Heart left ventricle (tissue), 16 donors: ENCODE measurements at regions of chr19 and their contacts with region 1.

Region 1: GRCh38 chr19:50511068-50511822 is at the start of gene JOSD2:
- DNase-seq: peak; percentile 98 to 100 (median 99)
- ATAC-seq: peak; percentile 94 to 97 (median 95)
- H3K4me3 ChIP-seq: peak within 1 kb of the TSS; percentile 42 to 89 (median 74)
- H3K27ac ChIP-seq: peak within 1 kb of the TSS; percentile 50 to 86 (median 78)
- H3K4me1 ChIP-seq: peaks cover 0 to 20% (median 8%) of the 10 kb centered on the region in 12 donors
- H3K27me3 ChIP-seq: peaks cover 0 to 8% (median 0%) of the 10 kb centered on the region in 9 donors
- CTCF ChIP-seq: peak in 1 of 12 donors; percentile 17
- POLR2A ChIP-seq: peak in 1 of 2 donors; percentile 77
- total RNA-seq, gene JOSD2: 18.7 to 43.8 (median 29.5) TPM

Region 2: DNA sequence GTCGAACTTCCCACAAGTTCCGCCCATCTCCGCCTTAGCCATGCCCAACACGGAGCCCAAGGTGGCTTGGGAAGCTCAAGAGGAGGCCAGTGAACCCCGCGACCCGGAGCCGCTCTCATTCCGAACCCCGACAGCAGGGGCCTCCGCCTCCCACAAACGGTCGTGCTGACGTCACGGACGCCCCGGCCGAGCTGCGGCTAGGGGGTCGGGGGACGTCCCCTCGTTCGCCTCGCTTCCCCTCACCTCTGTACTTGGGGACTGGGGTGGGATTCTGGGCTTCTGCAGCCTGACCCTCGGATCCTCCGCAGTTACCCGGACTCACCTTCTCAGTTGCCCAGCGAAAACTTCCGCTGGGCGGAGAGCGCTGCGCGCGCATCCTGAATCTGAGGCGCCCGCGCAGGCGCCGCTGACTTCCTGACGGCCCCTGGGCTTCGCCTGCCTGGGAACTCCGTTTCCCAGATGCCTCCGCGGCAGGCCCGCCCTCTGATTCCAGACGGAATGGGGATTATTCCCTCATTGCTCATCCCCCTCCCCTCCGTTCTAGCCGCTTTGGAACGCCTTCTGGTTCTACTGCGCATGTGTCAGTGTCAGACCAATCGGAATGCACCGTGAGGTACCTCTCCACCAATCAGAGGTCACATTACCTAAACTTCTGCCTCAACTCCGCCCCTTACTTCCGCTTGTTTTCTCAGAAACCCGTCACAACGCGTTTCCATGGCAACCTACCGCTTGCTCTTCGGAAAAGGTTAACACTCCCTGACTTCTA is 486.0 kb before region 1 on chr19 and contains the start of gene VRK3:
- intact Hi-C with region 1: loop called in 1 of 10 experiments (anchors 10 kb)
- DNase-seq: peak; percentile 99 to 100 (median 99)
- ATAC-seq: peak; percentile 96 to 99 (median 98)
- H3K4me3 ChIP-seq: peak within 1 kb of the TSS; percentile 73 to 100 (median 94)
- H3K27ac ChIP-seq: peak within 1 kb of the TSS; percentile 69 to 97 (median 93)
- H3K4me1 ChIP-seq: peaks cover 0 to 38% (median 24%) of the 10 kb centered on the region in 12 donors
- H3K27me3 ChIP-seq: no peaks in the 10 kb centered on the region
- CTCF ChIP-seq: peak in 2 of 12 donors; percentile 6 to 18
- POLR2A ChIP-seq: peak in 1 of 2 donors; percentile 73
- total RNA-seq, gene VRK3: 17.8 to 33.7 (median 23.1) TPM

Region 3: DNA sequence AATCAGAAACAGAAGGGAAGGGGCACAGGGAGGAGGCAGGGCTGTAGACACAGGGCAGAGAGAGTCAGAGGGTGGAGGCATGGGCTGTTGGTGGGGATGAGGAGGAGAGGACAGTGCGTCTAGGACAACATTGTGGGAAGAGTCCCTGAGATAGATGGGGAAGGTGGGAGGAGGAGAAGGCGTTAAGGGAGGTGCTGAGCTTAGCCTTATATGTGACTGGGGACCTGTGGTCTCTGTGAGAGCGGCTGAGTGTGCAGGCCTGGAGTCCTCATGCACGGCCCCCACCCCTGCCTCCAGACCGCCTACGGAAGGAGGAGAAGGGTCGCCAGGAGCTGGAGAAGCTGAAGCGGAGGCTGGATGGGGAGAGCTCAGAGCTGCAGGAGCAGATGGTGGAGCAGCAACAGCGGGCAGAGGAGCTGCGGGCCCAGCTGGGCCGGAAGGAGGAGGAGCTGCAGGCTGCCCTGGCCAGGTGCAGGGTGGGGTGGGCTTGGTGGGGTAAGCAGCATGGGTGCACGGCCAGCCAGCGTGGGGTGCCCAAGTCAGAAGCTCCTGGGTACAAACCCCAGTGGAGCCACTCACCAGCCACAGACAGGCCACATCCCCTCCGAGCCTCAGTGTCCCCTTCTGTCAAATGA is 238.9 kb before region 1 on chr19:
- intact Hi-C with region 1: no loop called
- DNase-seq: no peak
- ATAC-seq: no peak
- H3K4me3 ChIP-seq: no peak overlapping the region
- H3K27ac ChIP-seq: no peak overlapping the region
- H3K4me1 ChIP-seq: peaks cover 0 to 4% (median 0%) of the 10 kb centered on the region in 12 donors
- H3K27me3 ChIP-seq: no peaks in the 10 kb centered on the region
- CTCF ChIP-seq: no peak
- POLR2A ChIP-seq: no peak

Region 4: DNA sequence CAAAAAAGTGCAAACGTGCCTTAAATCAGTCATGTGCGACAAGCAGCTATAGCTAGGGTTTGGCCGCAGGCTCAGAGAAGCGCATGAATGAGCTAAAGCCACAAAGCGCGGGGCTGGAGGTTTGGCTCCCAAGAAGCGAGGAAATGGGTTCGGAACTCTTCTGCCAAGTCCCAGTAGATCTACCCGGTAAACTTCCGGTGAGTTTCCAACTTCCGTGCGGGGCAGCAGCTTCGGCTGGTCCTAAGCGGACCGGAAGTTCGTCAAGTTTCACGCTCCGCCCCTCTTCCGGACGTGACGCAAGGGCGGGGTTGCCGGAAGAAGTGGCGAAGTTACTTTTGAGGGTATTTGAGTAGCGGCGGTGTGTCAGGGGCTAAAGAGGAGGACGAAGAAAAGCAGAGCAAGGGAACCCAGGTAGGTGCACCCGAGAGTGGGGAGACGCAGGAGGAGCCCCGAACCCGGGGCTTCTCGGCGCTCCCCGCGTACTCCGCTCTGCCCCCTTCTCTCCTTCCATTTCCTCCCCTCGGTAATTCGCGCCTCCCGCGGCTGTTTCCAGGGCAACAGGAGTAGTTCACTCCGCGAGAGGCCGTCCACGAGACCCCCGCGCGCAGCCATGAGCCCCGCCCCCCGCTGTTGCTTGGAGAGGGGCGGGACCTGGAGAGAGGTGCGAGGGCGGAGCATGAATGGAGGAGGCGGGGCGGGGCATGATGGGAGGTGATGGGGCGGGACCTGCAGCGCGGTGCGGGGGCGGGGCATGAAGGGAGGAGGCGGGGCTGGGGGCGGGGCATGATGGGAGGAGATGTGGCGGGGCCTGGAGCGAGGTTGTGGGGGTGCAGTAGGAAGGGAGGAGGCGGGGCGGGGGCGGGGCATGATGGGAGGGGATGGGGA is 134.8 kb before region 1 on chr19 and contains the start of gene NR1H2:
- intact Hi-C with region 1: loop called in 2 of 10 experiments (anchors 2 to 5 kb)
- DNase-seq: peak; percentile 95 to 97 (median 95)
- ATAC-seq: peak; percentile 91 to 98 (median 93)
- H3K4me3 ChIP-seq: peak within 1 kb of the TSS; percentile 74 to 99 (median 92)
- H3K27ac ChIP-seq: peak within 1 kb of the TSS; percentile 96 to 100 (median 99)
- H3K4me1 ChIP-seq: peaks cover 0 to 43% (median 21%) of the 10 kb centered on the region in 12 donors
- H3K27me3 ChIP-seq: no peaks in the 10 kb centered on the region
- CTCF ChIP-seq: no peak
- POLR2A ChIP-seq: peak in 1 of 2 donors; percentile 79
- total RNA-seq, gene NR1H2: 66.2 to 162 (median 74.3) TPM

Region 5: GRCh38 chr19:50414864-50415660 is 96.2 kb before region 1 on chr19:
- intact Hi-C with region 1: no loop called
- DNase-seq: peak; percentile 64 to 90 (median 76)
- ATAC-seq: peak; percentile 71 to 87 (median 78)
- H3K4me3 ChIP-seq: no peak overlapping the region
- H3K27ac ChIP-seq: no peak overlapping the region
- H3K4me1 ChIP-seq: peaks cover 0 to 13% (median 0%) of the 10 kb centered on the region in 12 donors
- H3K27me3 ChIP-seq: peaks cover 12 to 32% (median 24%) of the 10 kb centered on the region in 9 donors
- CTCF ChIP-seq: peak; percentile 74 to 92 (median 88)
- POLR2A ChIP-seq: no peak

Region 6: GRCh38 chr19:50476224-50476942 is 34.9 kb before region 1 on chr19 and contains the starts of genes EMC10 and GARIN5A:
- intact Hi-C with region 1: loop called in 5 of 10 experiments (anchors 1 to 2 kb)
- DNase-seq: peak; percentile 90 to 96 (median 94)
- ATAC-seq: peak; percentile 84 to 98 (median 95)
- H3K4me3 ChIP-seq: peak within 1 kb of the TSS; percentile 47 to 99 (median 95)
- H3K27ac ChIP-seq: peak within 1 kb of the TSS; percentile 35 to 88 (median 80)
- H3K4me1 ChIP-seq: peaks cover 7 to 26% (median 14%) of the 10 kb centered on the region in 12 donors
- H3K27me3 ChIP-seq: no peaks in the 10 kb centered on the region
- CTCF ChIP-seq: no peak
- POLR2A ChIP-seq: peak in 1 of 2 donors; percentile 74
- total RNA-seq, gene EMC10: 72.8 to 138 (median 91.1) TPM
- total RNA-seq, gene GARIN5A: 0.51 to 6.4 (median 1.6) TPM